Adrenal gland (tissue), 19 donors: ENCODE measurements at regions of chr1 and their contacts with region 1.

Region 1: GRCh38 chr1:58047265-58047858 is 499.2 kb downstream of the OMA1 start:
- DNase-seq: peak in 6 of 7 donors; percentile 19 to 56 (median 32)
- H3K4me3 ChIP-seq: no peak overlapping the region
- H3K27ac ChIP-seq: no peak overlapping the region
- H3K4me1 ChIP-seq: no peaks in the 10 kb centered on the region
- H3K27me3 ChIP-seq: no peaks in the 10 kb centered on the region
- CTCF ChIP-seq: peak; percentile 27 to 69 (median 62)
- POLR2A ChIP-seq: no peak

Region 2: GRCh38 chr1:56666112-56666608 is 1381.2 kb before region 1 on chr1:
- intact Hi-C with region 1: no loop called
- DNase-seq: no peak
- H3K4me3 ChIP-seq: no peak overlapping the region
- H3K27ac ChIP-seq: no peak overlapping the region
- H3K4me1 ChIP-seq: no peaks in the 10 kb centered on the region
- H3K27me3 ChIP-seq: no peaks in the 10 kb centered on the region
- CTCF ChIP-seq: no peak
- POLR2A ChIP-seq: no peak

Region 3: DNA sequence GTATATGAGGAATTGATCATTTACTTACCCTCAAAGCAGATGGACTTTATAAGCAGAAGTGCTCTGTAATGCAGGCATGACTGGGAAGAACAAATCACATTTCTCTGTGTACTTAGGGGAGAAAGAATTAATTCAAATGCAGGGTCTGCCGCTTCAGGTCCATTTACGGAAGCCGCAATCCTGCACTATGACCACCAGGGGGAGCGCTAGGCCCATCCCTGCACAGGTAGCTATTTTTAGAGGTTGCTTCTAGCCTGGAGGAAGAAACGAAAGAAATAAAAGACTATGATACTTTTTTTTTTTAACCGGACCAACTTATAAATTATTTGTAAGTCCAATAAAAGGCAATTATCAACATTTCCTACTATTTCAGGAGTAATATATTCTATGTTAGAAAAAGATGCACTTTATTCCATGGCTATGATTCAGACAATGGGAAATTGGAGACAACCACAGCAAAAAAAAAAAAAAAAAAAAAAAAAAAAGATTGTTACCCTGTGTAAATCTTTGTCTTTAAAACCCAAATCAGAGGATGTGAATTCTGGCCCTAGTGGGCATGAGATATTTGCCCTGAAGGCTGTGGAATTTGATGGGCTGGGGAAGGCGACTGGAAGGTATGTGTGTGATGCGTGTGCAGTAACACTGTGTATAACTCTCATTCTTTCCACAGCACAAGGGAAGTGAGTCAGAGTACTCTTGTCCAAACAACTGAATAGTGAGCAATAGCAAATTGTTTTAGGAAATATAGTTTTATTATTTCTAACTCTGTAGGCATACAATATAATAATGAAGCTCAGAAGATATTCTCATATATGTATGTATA is 1215.3 kb before region 1 on chr1:
- intact Hi-C with region 1: loop called (anchors 5 to 10 kb)
- DNase-seq: peak; percentile 42 to 85 (median 65)
- H3K4me3 ChIP-seq: no peak overlapping the region
- H3K27ac ChIP-seq: no peak overlapping the region
- H3K4me1 ChIP-seq: peaks cover 0 to 4% of the 10 kb centered on the region in 2 donors
- H3K27me3 ChIP-seq: peaks cover 12% of the 10 kb centered on the region
- CTCF ChIP-seq: peak; percentile 86 to 98 (median 92)
- POLR2A ChIP-seq: no peak

Region 4: DNA sequence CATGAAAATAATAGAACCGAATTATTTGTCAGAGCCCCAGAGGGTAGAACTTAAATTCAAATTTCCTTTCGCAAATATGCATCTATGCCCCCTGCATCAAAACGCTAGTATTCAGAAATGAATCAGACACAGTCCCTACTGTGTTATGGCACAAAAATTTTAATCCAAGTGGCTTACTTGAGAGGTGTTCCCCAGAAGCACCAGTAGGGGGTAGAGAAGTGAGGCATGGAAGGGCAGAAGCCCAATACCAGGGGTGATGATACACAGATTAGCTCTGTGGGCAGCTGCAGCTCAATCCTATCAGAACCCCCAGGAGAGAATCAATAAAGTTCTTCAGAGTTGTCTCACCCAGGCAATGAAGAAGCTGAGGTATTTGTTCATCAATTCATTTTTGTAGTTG is 156.9 kb after region 1 on chr1:
- intact Hi-C with region 1: no loop called
- DNase-seq: no peak
- H3K4me3 ChIP-seq: no peak overlapping the region
- H3K27ac ChIP-seq: no peak overlapping the region
- H3K4me1 ChIP-seq: no peaks in the 10 kb centered on the region
- H3K27me3 ChIP-seq: no peaks in the 10 kb centered on the region
- CTCF ChIP-seq: no peak
- POLR2A ChIP-seq: no peak

Region 5: DNA sequence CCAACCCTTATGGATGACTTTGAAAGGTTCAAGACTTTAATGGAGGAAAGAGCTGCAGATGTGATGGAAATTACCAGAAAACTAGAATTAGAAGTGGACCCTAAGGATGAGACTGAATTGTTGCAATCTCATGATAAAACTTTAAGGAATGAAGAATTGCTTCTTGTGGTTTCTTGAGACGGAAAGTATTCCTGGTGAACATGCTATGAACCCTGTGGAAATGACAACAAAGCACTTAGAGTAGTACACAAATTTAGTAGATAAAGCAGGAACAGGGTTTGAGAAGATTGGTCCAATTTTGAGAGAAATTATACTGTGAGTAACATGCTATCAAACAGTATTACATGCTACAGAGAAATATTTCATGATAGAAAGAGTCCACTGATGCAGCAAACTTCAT is 283.8 kb after region 1 on chr1:
- intact Hi-C with region 1: no loop called
- DNase-seq: no peak
- H3K4me3 ChIP-seq: no peak overlapping the region
- H3K27ac ChIP-seq: no peak overlapping the region
- H3K4me1 ChIP-seq: no peaks in the 10 kb centered on the region
- H3K27me3 ChIP-seq: no peaks in the 10 kb centered on the region
- CTCF ChIP-seq: no peak
- POLR2A ChIP-seq: no peak